ENCODE measurements at regions of chr22 and their contacts with region 1.

Region 1: GRCh38 chr22:30253205-30253852 is 6.8 kb upstream of the LIF start:
- DNase-seq: no peak
- H3K4me3 ChIP-seq: no peak overlapping the region
- H3K27ac ChIP-seq: no peak overlapping the region
- H3K4me1 ChIP-seq: peaks cover 7% of the 10 kb centered on the region
- H3K27me3 ChIP-seq: no peaks in the 10 kb centered on the region
- CTCF ChIP-seq: no peak

Region 2: DNA sequence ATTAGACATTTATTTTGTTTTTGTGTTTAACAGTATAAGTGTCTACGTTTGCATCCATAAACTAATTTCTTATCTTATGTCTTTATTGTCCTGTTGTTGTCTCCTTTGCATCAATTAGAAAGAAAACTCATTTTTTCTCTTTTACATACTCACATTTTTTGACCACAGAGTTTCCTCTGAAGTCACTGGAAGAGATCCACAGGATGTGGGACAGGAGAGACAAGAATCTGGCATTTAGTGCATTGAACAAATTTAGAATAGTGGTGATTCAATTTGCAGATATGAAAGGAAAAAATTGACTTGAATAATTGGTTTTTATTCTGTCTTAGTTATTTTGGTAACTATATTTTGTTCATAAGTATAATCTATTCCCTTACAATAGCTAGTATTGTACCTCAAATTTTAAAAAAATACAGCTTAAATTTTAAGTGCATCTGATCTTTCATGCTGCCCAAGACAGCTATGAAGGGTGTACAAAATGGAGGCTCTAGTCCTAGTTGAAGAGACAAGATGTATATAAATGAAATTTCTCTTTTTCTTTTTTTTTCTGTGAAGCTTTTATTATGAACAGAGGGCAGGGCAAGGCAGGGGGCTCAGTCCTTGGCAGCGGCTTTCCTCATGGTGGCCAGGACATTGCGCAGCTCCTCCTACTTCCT is 148.7 kb before region 1 on chr22:
- CTCF ChIA-PET with region 1: interaction called, 7 read pairs
- POLR2A ChIA-PET with region 1: no interaction called
- intact Hi-C with region 1: loop called (anchors 1 kb)
- DNase-seq: no peak
- H3K4me3 ChIP-seq: no peak overlapping the region
- H3K27ac ChIP-seq: no peak overlapping the region
- H3K4me1 ChIP-seq: no peaks in the 10 kb centered on the region
- H3K27me3 ChIP-seq: no peaks in the 10 kb centered on the region
- CTCF ChIP-seq: no peak

Region 3: GRCh38 chr22:30227438-30228228 is 25.7 kb before region 1 on chr22:
- CTCF ChIA-PET with region 1: interaction called, 12 read pairs
- POLR2A ChIA-PET with region 1: no interaction called
- intact Hi-C with region 1: no loop called
- DNase-seq: no peak
- H3K4me3 ChIP-seq: no peak overlapping the region
- H3K27ac ChIP-seq: no peak overlapping the region
- H3K4me1 ChIP-seq: no peaks in the 10 kb centered on the region
- H3K27me3 ChIP-seq: no peaks in the 10 kb centered on the region
- CTCF ChIP-seq: no peak

Measured in A673 (cell line).